Ascending aorta (tissue), 2 donors: ENCODE measurements at regions of chr7 and their contacts with region 1.

Region 1: DNA sequence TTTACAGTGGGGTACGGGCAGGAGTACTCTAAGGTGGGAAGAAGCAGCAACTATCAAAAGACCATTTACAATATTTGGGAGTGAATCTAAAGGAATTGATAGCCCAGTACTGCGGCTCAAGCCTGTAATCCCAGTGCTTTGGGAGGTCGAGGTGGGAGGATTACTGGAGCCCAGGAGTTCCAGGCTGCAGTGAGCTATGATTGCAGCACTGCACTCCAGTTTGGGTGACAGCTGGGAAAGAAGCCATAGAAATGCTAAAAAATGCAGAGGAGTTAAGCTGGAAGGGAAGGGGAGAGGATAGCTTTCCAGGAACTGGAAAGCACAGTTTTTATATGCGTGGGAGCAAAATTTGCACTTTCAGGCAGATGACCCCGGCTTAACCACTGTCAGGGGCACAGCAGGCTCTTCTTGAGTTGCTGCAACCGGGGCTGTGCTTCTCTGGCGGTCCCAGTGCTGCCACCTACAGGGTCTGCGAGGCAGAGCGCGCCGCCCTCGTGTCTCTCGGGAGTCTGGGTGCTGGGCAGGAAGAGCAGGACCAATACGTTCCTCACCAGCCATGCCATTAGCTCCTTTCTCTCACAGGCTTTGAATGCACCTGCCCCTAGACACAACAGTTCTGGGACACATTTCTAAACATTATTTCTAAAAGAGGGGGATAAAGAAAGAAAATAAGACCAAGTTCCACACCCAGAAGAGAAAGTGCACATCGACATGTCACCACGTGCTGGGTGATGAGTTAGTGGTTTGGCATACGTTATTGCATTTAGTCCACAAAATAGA is 10.1 kb upstream of the BMPER start:
- DNase-seq: peak; percentile 36 to 92
- H3K4me3 ChIP-seq: no peak overlapping the region
- H3K27ac ChIP-seq: no peak overlapping the region
- H3K4me1 ChIP-seq: no peaks in the 10 kb centered on the region
- H3K27me3 ChIP-seq: no peaks in the 10 kb centered on the region
- CTCF ChIP-seq: peak; percentile 64 to 87 (median 85)

Region 2: GRCh38 chr7:33243319-33243881 is 651.8 kb before region 1 on chr7:
- intact Hi-C with region 1: loop called (anchors 5 kb)
- DNase-seq: no peak
- H3K4me3 ChIP-seq: no peak overlapping the region
- H3K27ac ChIP-seq: no peak overlapping the region
- H3K4me1 ChIP-seq: no peaks in the 10 kb centered on the region
- H3K27me3 ChIP-seq: no peaks in the 10 kb centered on the region
- CTCF ChIP-seq: peak; percentile 28 to 63 (median 39)

Region 3: GRCh38 chr7:33757562-33758165 is 137.6 kb before region 1 on chr7:
- intact Hi-C with region 1: loop called (anchors 1 kb)
- DNase-seq: no peak
- H3K4me3 ChIP-seq: no peak overlapping the region
- H3K27ac ChIP-seq: no peak overlapping the region
- H3K4me1 ChIP-seq: peaks cover 0 to 3% of the 10 kb centered on the region in 2 donors
- H3K27me3 ChIP-seq: no peaks in the 10 kb centered on the region
- CTCF ChIP-seq: peak; percentile 25 to 70 (median 60)

Region 4: DNA sequence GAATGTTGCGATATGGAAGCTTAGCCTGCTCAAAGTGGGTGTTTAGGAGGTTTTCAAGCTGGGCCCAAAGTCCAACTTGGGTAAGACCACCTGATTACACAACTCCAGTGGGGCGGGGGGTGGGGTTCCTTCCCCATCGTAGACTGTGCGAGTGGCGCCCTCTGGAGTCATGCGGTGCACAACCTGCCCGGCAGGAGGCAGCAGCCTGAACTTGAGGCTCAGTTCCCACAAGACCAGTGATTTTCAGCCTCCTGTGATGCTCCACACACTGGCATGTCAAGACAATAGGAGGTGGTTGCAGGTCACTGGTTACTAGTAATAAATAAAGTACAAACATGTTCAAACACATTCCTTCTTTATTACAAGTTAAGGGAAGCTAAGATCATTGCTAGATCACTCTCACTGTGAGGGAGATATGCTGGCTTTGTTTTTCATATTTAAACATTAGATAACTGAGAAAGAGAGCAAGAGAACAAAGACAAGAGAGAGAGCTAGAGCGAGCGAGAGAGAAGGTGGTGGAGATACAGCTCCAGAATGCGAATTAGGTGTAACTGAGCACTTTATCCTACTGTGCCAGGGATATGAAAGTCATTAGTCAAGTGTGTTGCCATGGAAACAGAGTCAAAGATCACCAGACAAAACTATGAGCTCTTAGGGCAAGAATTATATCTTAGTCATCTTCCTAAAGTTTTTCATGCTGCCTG is 87.3 kb before region 1 on chr7:
- intact Hi-C with region 1: loop called (anchors 5 kb)
- DNase-seq: no peak
- H3K4me3 ChIP-seq: no peak overlapping the region
- H3K27ac ChIP-seq: peak overlapping the region in 1 of 2 donors; percentile 51
- H3K4me1 ChIP-seq: peaks cover 0 to 16% of the 10 kb centered on the region in 2 donors
- H3K27me3 ChIP-seq: no peaks in the 10 kb centered on the region
- CTCF ChIP-seq: peak in 1 of 3 experiments; percentile 8

Region 5: DNA sequence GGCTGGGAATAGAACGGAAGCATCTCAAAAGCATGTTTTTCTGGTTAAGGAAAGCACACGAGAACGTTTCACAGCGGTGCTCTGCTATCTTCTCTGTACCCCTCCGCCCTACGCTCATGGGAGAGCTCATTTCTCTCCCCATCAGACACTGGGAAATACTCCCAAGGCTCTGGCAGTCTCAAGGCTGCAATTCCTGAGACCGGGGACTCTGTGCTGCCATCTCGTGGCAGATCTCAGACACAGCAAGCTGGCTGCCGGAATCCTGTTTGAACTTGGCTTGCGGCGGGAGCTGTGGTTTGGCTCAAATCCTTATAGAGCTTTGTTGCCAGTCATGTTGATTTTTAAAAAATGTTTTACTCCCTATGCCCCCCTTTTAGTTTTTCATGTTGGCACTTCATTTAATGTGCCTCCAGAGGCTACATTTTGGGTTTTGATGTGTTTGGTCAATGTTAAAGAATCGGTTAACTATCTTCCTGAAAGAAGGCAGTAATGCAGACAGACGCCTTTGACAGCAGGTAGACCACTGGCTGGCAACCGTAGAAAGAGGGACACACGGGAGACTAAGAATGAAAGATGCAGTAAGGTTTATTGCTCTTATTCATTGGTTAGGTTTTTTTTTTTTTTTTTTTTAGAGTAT is 37.7 kb after region 1 on chr7:
- intact Hi-C with region 1: loop called (anchors 2 kb)
- DNase-seq: peak; percentile 11 to 89
- H3K4me3 ChIP-seq: peak overlapping the region; percentile 32 to 50
- H3K27ac ChIP-seq: no peak overlapping the region
- H3K4me1 ChIP-seq: no peaks in the 10 kb centered on the region
- H3K27me3 ChIP-seq: no peaks in the 10 kb centered on the region
- CTCF ChIP-seq: peak; percentile 75 to 97 (median 95)

Region 6: GRCh38 chr7:33986941-33987588 is 91.8 kb after region 1 on chr7:
- intact Hi-C with region 1: no loop called
- DNase-seq: no peak
- H3K4me3 ChIP-seq: no peak overlapping the region
- H3K27ac ChIP-seq: no peak overlapping the region
- H3K4me1 ChIP-seq: no peaks in the 10 kb centered on the region
- H3K27me3 ChIP-seq: no peaks in the 10 kb centered on the region
- CTCF ChIP-seq: no peak